Activated B cell treated with CpG ODN at 0.5 μM for 24 hours (primary cell): ENCODE measurements at regions of chr1 and their contacts with region 1.

Region 1: DNA sequence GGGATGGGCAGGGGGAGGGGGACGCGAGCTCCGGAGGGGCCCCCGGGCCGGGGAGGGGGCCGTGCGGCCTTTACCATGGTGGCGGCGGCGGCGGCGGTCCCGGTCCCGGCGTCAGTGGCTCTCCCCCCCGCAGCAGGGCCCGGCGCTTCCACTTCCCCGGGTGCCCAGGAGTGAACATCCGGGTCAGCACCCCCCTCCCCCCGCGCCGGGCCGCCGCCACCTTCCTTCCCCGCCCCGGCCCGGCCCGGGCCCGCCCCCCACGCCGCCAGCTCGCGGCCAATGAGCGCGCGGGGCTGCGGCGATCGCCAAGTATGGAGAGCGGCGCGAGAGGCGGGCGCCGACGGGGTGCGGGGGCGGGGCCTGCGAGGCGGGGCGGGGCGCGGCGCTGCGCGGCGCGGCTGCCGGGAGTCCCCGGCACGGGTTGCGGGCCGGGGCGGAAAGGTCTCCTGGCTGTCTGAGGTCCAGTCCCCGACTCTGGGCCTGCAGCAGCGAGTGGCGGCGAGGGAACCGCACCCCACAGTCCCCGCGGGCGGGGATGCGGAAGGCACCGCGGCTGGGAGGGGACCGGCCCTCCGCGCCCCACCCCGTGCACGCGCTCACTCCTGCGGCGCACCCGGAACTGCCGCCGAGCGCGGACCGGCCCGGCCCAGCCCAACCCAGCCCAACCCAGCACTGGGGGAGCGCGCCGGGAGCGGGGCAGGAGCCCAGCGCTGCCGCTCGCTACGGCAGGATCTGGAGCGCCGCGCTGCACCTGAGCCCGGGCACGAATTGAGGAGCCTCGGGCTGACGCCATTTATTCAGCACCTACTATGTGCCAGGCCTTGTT is at the start of gene CAPZB:
- DNase-seq: peak; percentile 91
- ATAC-seq: peak; percentile 92
- H3K4me3 Mint-ChIP-seq: peak within 1 kb of the TSS; percentile 90
- H3K27ac Mint-ChIP-seq: peak within 1 kb of the TSS; percentile 91
- H3K4me1 Mint-ChIP-seq: peaks cover 54% of the 10 kb centered on the region
- H3K27me3 Mint-ChIP-seq: no peaks in the 10 kb centered on the region
- CTCF ChIP-seq: no peak
- total RNA-seq, gene CAPZB: 334 and 349 TPM in 2 replicates

Region 2: GRCh38 chr1:19179597-19180264 is 305.8 kb before region 1 on chr1:
- CTCF ChIA-PET with region 1: no interaction called
- POLR2A ChIA-PET with region 1: no interaction called
- intact Hi-C with region 1: no loop called
- DNase-seq: no peak
- ATAC-seq: no peak
- H3K4me3 Mint-ChIP-seq: no peak overlapping the region
- H3K27ac Mint-ChIP-seq: no peak overlapping the region
- H3K4me1 Mint-ChIP-seq: no peaks in the 10 kb centered on the region
- H3K27me3 Mint-ChIP-seq: no peaks in the 10 kb centered on the region
- CTCF ChIP-seq: no peak

Region 3: DNA sequence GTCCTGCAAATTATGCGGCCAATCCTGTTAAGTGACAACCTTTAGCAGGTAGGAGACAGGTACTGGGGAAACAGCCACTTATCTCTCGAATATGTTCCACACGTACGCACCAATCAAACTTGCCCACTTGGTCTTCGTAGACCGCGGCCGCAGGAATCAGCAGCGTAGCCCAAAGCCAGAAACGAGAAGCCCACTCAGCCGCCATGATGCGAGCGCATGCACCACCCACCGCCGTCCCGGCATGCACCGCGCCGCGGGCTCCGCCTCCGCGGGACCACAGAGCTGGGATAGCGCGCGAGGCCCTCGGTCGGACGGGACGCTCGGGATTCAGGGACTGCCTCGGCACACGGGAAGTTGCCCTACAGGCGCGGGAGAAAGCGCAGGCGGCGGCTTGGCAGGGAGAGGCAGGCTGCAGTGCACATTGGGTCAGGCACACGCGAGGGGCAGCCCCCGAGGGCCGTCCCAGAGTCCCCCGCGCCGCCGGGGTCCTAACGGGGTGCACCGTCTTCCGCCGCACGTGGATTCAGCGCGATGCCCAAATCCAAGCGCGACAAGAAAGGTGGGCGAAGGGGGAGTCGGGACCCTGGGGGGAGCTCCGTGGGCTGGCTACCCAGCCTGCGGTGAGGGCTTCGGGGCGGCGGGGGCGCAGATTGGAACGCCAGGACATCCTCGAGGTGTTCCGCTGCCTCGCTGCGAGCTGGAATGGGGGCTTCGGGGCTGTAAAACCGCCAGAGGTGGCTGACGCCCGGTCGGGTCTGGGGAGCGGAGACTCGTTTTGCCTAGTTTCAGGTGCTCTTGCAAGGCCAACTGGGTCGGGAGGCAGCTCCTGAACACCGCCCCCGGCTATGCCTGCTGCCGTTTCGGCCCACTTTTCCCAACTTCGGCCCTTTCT is 234.0 kb before region 1 on chr1 and contains the starts of genes EMC1 and MRTO4:
- CTCF ChIA-PET with region 1: no interaction called
- POLR2A ChIA-PET with region 1: interaction called, 3 read pairs
- intact Hi-C with region 1: loop called (anchors 2 kb)
- DNase-seq: peak; percentile 97
- ATAC-seq: peak; percentile 93
- H3K4me3 Mint-ChIP-seq: peak within 1 kb of the TSS; percentile 96
- H3K27ac Mint-ChIP-seq: peak within 1 kb of the TSS; percentile 92
- H3K4me1 Mint-ChIP-seq: peaks cover 32% of the 10 kb centered on the region
- H3K27me3 Mint-ChIP-seq: no peaks in the 10 kb centered on the region
- CTCF ChIP-seq: no peak
- total RNA-seq, gene EMC1: 40.0 and 42.7 TPM in 2 replicates
- total RNA-seq, gene MRTO4: 61.5 and 73.1 TPM in 2 replicates

Region 4: DNA sequence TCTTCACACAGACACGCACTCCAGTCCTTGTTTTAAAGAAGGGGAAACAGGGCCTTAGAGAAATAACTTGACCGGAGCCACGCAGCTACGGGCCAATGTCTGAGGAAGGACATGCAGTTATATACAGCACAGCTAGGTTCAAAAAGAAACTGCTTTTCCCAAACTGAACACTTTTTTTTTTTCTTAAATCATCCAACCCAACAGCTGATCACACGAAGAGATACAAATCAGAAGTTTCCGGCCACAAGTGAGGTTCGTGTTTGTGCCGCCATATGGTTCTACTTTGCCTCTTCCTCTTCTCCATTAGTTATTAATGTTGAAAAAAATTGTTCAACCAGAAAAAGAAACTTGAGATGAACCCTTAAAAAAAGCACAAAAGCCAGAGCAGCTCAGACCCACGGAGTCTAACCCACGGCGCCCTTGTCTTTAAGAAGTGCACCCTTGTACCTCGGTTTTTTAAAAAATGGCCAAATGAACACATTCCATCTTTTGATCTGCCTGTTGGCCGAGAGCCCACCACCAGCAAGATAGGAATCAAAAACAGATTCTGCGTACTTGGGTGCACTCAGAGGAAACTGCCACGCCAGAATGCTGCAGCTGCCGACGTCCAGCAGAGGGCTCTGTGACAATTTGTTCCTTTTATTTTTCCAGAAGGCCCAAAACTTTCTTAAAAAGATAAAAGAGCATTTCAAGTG is 94.5 kb before region 1 on chr1:
- CTCF ChIA-PET with region 1: interaction called, 15 read pairs
- POLR2A ChIA-PET with region 1: interaction called, 11 read pairs
- intact Hi-C with region 1: loop called (anchors 1 kb)
- DNase-seq: no peak
- ATAC-seq: peak; percentile 82
- H3K4me3 Mint-ChIP-seq: peak overlapping the region; percentile 83
- H3K27ac Mint-ChIP-seq: peak overlapping the region; percentile 95
- H3K4me1 Mint-ChIP-seq: peaks cover 80% of the 10 kb centered on the region
- H3K27me3 Mint-ChIP-seq: no peaks in the 10 kb centered on the region
- CTCF ChIP-seq: no peak

Region 5: DNA sequence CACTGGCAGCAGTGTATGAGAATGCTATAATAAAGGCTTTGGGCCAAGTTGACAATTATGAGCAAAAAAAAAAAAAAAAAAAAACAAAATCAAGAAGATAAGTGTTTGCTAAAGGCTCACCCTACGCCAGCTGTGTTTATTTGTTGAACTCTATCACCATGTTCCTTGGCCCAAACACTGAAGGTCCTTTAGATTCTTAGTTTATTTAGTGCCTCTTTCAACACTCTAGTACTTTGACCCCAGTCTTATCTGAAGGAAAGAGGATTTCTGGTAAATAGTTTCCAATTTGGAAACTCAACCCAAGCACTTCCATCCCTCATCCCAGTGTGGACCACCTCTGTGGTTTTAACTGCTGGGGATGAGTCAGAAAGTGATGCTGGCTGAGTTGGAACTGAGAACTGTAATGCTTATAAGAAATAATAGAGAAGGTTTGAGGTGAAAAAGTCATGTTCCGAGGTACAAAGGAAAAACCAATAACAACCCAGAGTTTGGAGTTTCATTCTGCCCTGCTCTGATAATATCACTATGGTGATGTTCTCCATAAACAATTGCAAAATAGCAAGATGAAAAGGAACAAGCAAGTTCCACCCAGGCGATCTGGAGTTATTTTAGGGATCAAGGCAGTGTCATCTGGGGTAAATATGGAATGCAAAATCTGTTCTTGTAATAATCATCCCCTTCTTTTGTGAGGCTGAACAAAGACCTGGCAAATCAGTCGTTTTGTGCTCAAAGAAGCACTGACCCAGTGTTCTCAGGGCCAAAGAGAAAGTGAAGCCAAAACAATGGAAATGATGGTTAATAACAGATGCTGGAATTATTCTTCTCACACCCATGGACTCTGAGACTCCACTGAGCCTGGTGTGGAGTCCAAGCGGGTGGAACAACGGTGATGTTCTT is 19.5 kb after region 1 on chr1:
- CTCF ChIA-PET with region 1: no interaction called
- POLR2A ChIA-PET with region 1: interaction called, 26 read pairs
- intact Hi-C with region 1: loop called (anchors 2 kb)
- DNase-seq: no peak
- ATAC-seq: no peak
- H3K4me3 Mint-ChIP-seq: peak overlapping the region; percentile 62
- H3K27ac Mint-ChIP-seq: peak overlapping the region; percentile 30
- H3K4me1 Mint-ChIP-seq: peaks cover 43% of the 10 kb centered on the region
- H3K27me3 Mint-ChIP-seq: no peaks in the 10 kb centered on the region
- CTCF ChIP-seq: no peak

Region 6: GRCh38 chr1:19533626-19534025 is 48.1 kb after region 1 on chr1:
- CTCF ChIA-PET with region 1: no interaction called
- POLR2A ChIA-PET with region 1: no interaction called
- intact Hi-C with region 1: no loop called
- DNase-seq: no peak
- ATAC-seq: no peak
- H3K4me3 Mint-ChIP-seq: no peak overlapping the region
- H3K27ac Mint-ChIP-seq: no peak overlapping the region
- H3K4me1 Mint-ChIP-seq: no peaks in the 10 kb centered on the region
- H3K27me3 Mint-ChIP-seq: no peaks in the 10 kb centered on the region
- CTCF ChIP-seq: no peak

Region 7: DNA sequence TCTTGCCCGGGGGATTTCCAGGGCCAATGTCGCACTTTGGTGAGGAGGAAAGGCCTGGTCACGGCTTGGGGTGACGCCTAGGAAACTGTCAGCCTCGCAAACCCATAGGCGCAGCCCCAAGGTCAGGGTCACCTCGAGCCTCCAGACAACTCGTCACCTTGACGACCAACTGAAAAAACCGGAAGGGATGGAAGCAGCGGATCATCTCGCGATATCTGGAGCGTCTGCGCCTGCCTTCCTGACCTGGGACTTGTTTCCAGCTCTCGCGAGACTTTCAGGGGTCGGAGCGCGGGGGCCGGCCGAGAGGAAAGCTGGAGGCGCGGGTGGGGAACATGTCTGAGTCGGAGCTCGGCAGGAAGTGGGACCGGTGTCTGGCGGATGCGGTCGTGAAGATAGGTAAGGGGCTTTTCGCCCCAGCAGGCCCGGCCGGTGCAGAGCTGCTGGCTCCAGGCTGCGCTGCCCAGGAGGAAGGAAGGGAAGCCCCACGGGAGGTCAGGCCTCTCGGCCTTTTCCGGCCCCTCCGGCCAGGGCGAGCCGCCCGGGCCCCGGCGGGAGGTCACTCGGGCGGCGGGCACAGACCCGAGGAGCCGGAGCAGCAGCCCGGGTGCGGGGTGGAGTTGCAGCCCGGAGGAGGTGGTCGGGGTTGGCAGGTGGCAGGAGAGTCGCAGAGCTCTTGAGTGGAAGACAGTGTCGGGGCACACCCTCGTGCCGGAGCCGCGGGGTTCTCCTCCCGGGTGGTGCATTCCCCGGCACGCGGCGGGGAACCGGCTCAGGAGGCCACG is 111.3 kb after region 1 on chr1:
- CTCF ChIA-PET with region 1: interaction called, 4 read pairs
- POLR2A ChIA-PET with region 1: interaction called, 20 read pairs
- intact Hi-C with region 1: loop called (anchors 1 kb)
- DNase-seq: peak; percentile 86
- ATAC-seq: peak; percentile 91
- H3K4me3 Mint-ChIP-seq: peak overlapping the region; percentile 100
- H3K27ac Mint-ChIP-seq: peak overlapping the region; percentile 99
- H3K4me1 Mint-ChIP-seq: peaks cover 48% of the 10 kb centered on the region
- H3K27me3 Mint-ChIP-seq: no peaks in the 10 kb centered on the region
- CTCF ChIP-seq: no peak

Region 8: GRCh38 chr1:20732588-20733360 is 1247.2 kb after region 1 on chr1 and contains the start of gene SH2D5:
- CTCF ChIA-PET with region 1: no interaction called
- POLR2A ChIA-PET with region 1: interaction called, 13 read pairs
- intact Hi-C with region 1: no loop called
- DNase-seq: peak; percentile 45
- ATAC-seq: peak; percentile 74
- H3K4me3 Mint-ChIP-seq: peak within 1 kb of the TSS; percentile 85
- H3K27ac Mint-ChIP-seq: peak within 1 kb of the TSS; percentile 62
- H3K4me1 Mint-ChIP-seq: peaks cover 29% of the 10 kb centered on the region
- H3K27me3 Mint-ChIP-seq: peaks cover 11% of the 10 kb centered on the region
- CTCF ChIP-seq: no peak
- total RNA-seq, gene SH2D5: 0.69 and 0.89 TPM in 2 replicates